A673 (cell line): ENCODE measurements at regions of chr22 and their contacts with region 1.

Region 1: GRCh38 chr22:32165681-32166080 is 6.6 kb upstream of the C22orf42 start:
- DNase-seq: no peak
- H3K4me3 ChIP-seq: no peak overlapping the region
- H3K27ac ChIP-seq: no peak overlapping the region
- H3K4me1 ChIP-seq: no peaks in the 10 kb centered on the region
- H3K27me3 ChIP-seq: peaks cover 44% of the 10 kb centered on the region
- CTCF ChIP-seq: no peak

Region 2: GRCh38 chr22:33044112-33044511 is 878.4 kb after region 1 on chr22:
- CTCF ChIA-PET with region 1: interaction called, 10 read pairs
- POLR2A ChIA-PET with region 1: no interaction called
- intact Hi-C with region 1: no loop called
- DNase-seq: no peak
- H3K4me3 ChIP-seq: no peak overlapping the region
- H3K27ac ChIP-seq: no peak overlapping the region
- H3K4me1 ChIP-seq: no peaks in the 10 kb centered on the region
- H3K27me3 ChIP-seq: no peaks in the 10 kb centered on the region
- CTCF ChIP-seq: no peak